Activated CD8-positive, alpha-beta T cell treated with anti-CD3 and anti-CD28 coated beads for 36 hours (primary cell): ENCODE measurements at regions of chr19 and their contacts with region 1.

Region 1: GRCh38 chr19:15379083-15379995 is at the start of gene AKAP8:
- DNase-seq: peak; percentile 98
- ATAC-seq: peak; percentile 90
- H3K4me3 Mint-ChIP-seq: peak within 1 kb of the TSS; percentile 86
- H3K27ac Mint-ChIP-seq: peak within 1 kb of the TSS; percentile 99
- H3K4me1 Mint-ChIP-seq: peaks cover 34% of the 10 kb centered on the region
- H3K27me3 Mint-ChIP-seq: no peaks in the 10 kb centered on the region
- CTCF ChIP-seq: no peak
- total RNA-seq, gene AKAP8: 47.6 to 48.2 TPM

Region 2: DNA sequence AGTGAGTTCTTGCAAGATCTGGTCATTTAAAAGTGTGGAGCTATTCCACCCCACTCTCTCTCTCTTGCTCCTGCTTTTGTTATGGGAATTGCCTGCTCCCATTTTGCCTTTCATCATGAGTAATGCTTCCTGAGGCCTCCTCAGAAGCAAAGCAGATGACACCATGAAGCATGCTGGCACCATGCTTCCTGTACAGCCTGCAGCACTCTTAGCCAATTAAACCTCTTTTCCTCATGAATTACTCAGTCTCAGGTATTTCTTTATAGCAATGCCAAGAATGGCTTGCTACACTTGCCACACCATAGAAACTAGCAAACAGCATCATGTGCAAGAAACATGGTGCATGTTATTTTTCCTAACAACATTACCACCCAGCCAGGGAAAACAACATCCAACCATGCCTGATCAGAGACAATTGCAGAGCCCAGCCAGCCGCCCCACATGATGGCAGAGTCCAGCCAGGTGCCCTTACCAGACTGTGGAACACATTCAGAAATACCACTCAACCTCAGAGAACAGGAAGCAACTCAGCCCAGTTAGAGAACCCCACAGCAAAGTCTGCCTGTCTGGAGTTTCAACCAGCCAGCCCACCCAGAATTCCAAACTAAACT is 235.2 kb before region 1 on chr19:
- CTCF ChIA-PET with region 1: no interaction called
- POLR2A ChIA-PET with region 1: no interaction called
- intact Hi-C with region 1: no loop called
- DNase-seq: no peak
- ATAC-seq: no peak
- H3K4me3 Mint-ChIP-seq: no peak overlapping the region
- H3K27ac Mint-ChIP-seq: no peak overlapping the region
- H3K4me1 Mint-ChIP-seq: no peaks in the 10 kb centered on the region
- H3K27me3 Mint-ChIP-seq: no peaks in the 10 kb centered on the region
- CTCF ChIP-seq: no peak

Region 3: GRCh38 chr19:15332311-15332996 is 46.9 kb before region 1 on chr19 and contains the start of gene BRD4:
- CTCF ChIA-PET with region 1: no interaction called
- POLR2A ChIA-PET with region 1: interaction called, 14 read pairs
- intact Hi-C with region 1: no loop called
- DNase-seq: peak; percentile 78
- ATAC-seq: peak; percentile 59
- H3K4me3 Mint-ChIP-seq: peak within 1 kb of the TSS; percentile 89
- H3K27ac Mint-ChIP-seq: peak within 1 kb of the TSS; percentile 97
- H3K4me1 Mint-ChIP-seq: peaks cover 31% of the 10 kb centered on the region
- H3K27me3 Mint-ChIP-seq: no peaks in the 10 kb centered on the region
- CTCF ChIP-seq: no peak
- total RNA-seq, gene BRD4: 94.3 to 99.6 TPM

Region 4: GRCh38 chr19:15358918-15359317 is 20.4 kb before region 1 on chr19:
- CTCF ChIA-PET with region 1: interaction called, 4 read pairs
- POLR2A ChIA-PET with region 1: interaction called, 34 read pairs
- intact Hi-C with region 1: no loop called
- DNase-seq: no peak
- ATAC-seq: no peak
- H3K4me3 Mint-ChIP-seq: no peak overlapping the region
- H3K27ac Mint-ChIP-seq: peak overlapping the region; percentile 37
- H3K4me1 Mint-ChIP-seq: peaks cover 2% of the 10 kb centered on the region
- H3K27me3 Mint-ChIP-seq: no peaks in the 10 kb centered on the region
- CTCF ChIP-seq: no peak

Region 5: DNA sequence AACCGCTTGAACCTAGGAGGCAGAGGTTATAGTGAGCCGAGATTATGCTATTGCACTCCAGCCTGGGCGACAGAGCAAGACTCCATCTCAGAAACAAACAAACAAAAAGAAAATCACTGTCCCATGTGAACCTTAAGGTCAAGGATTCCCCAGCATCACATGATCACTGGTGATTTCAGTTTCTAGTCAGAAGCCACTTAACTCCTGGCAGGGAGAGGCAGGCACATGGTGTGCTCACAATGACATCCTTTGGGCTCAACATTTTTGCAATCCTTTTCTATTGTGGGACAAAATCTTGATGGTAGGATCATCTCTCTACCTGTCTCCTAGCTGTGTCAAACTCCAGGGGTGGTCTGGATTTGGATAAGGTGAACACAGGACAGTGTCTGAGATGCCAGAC is 11.9 kb before region 1 on chr19:
- CTCF ChIA-PET with region 1: no interaction called
- POLR2A ChIA-PET with region 1: interaction called, 11 read pairs
- intact Hi-C with region 1: no loop called
- DNase-seq: no peak
- ATAC-seq: no peak
- H3K4me3 Mint-ChIP-seq: no peak overlapping the region
- H3K27ac Mint-ChIP-seq: no peak overlapping the region
- H3K4me1 Mint-ChIP-seq: no peaks in the 10 kb centered on the region
- H3K27me3 Mint-ChIP-seq: no peaks in the 10 kb centered on the region
- CTCF ChIP-seq: no peak

Region 6: GRCh38 chr19:15432629-15433518 is 53.5 kb after region 1 on chr19:
- CTCF ChIA-PET with region 1: no interaction called
- POLR2A ChIA-PET with region 1: interaction called, 13 read pairs
- intact Hi-C with region 1: no loop called
- DNase-seq: peak; percentile 94
- ATAC-seq: peak; percentile 93
- H3K4me3 Mint-ChIP-seq: peak overlapping the region; percentile 82
- H3K27ac Mint-ChIP-seq: peak overlapping the region; percentile 86
- H3K4me1 Mint-ChIP-seq: peaks cover 28% of the 10 kb centered on the region
- H3K27me3 Mint-ChIP-seq: no peaks in the 10 kb centered on the region
- CTCF ChIP-seq: no peak

Region 7: DNA sequence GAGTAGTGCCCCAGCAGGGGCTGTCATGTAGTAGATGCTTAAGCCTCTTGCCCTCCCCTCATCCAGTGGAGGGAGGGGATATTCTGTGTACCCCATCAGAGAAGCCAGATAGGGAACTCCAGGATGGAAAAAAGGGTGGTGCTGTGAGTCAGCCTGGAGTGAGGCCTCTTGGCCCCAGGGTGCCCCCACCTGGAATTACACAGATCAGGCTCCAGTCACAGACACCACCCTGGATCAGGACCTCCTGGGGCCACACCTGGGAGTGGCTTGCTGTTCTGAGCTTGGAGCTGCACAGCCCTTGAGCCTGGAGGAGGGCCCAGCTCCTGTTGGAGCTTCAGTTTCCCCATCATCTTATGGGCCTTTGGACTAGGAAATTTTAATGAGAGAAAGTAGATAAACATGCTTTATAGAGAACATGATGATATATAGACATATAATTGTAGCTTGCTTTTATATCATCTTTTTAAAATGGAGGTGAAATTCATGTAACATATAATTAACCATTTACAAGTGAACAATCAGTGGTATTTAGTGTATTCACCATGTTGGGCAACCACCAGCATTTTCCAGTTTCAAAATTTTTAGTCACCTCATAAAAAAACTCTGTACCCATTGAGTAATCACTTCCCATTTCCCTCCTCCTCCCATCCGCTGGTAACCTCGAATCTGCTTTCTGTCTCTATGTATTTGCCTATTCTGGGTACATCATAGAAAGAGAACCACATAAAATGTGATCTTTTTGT is 153.6 kb after region 1 on chr19:
- CTCF ChIA-PET with region 1: no interaction called
- POLR2A ChIA-PET with region 1: no interaction called
- intact Hi-C with region 1: no loop called
- DNase-seq: peak; percentile 51
- ATAC-seq: peak; percentile 81
- H3K4me3 Mint-ChIP-seq: no peak overlapping the region
- H3K27ac Mint-ChIP-seq: peak overlapping the region; percentile 66
- H3K4me1 Mint-ChIP-seq: peaks cover 32% of the 10 kb centered on the region
- H3K27me3 Mint-ChIP-seq: no peaks in the 10 kb centered on the region
- CTCF ChIP-seq: no peak